ENCODE measurements at regions of chr17 and their contacts with region 1.

Region 1: GRCh38 chr17:42997984-42998938 is at the start of gene RPL27:
- DNase-seq: peak; percentile 89 to 99 (median 98)
- ATAC-seq: peak; percentile 97
- H3K4me3 ChIP-seq: peak within 1 kb of the TSS; percentile 91
- H3K4me3 Mint-ChIP-seq: peak within 1 kb of the TSS; percentile 74 to 98 (median 95)
- H3K27ac ChIP-seq: peak within 1 kb of the TSS; percentile 97
- H3K27ac Mint-ChIP-seq: peak within 1 kb of the TSS; percentile 89 to 100 (median 99)
- H3K4me1 ChIP-seq: peaks cover 15 to 18% of the 10 kb centered on the region in 2 donors
- H3K4me1 Mint-ChIP-seq: peaks cover 16 to 29% (median 24%) of the 10 kb centered on the region in 7 donors
- H3K27me3 ChIP-seq: no peaks in the 10 kb centered on the region
- H3K27me3 Mint-ChIP-seq: no peaks in the 10 kb centered on the region
- total RNA-seq, gene RPL27: 951 to 1,861 (median 1,662) TPM

Region 2: GRCh38 chr17:42677008-42677857 is 321.0 kb before region 1 on chr17:
- CTCF ChIA-PET with region 1: no interaction called
- POLR2A ChIA-PET with region 1: no interaction called
- intact Hi-C with region 1: loop called in 1 of 2 experiments (anchors 1 kb)
- DNase-seq: peak; percentile 80 to 98 (median 92)
- ATAC-seq: peak; percentile 90
- H3K4me3 ChIP-seq: peak overlapping the region; percentile 73
- H3K4me3 Mint-ChIP-seq: peak overlapping the region; percentile 79 to 94 (median 90)
- H3K27ac ChIP-seq: peak overlapping the region; percentile 64
- H3K27ac Mint-ChIP-seq: peak overlapping the region in 8 of 9 donors; percentile 7 to 91 (median 82)
- H3K4me1 ChIP-seq: peaks cover 47 to 57% of the 10 kb centered on the region in 2 donors
- H3K4me1 Mint-ChIP-seq: peaks cover 21 to 60% (median 50%) of the 10 kb centered on the region in 7 donors
- H3K27me3 ChIP-seq: peaks cover 5 to 21% of the 10 kb centered on the region in 2 donors
- H3K27me3 Mint-ChIP-seq: peaks cover 26 to 49% (median 36%) of the 10 kb centered on the region in 5 donors

Region 3: GRCh38 chr17:42819944-42820535 is 178.2 kb before region 1 on chr17:
- CTCF ChIA-PET with region 1: no interaction called
- POLR2A ChIA-PET with region 1: interaction called, 9 read pairs
- intact Hi-C with region 1: loop called in 1 of 2 experiments (anchors 1 kb)
- DNase-seq: peak; percentile 16 to 57 (median 34)
- ATAC-seq: no peak
- H3K4me3 ChIP-seq: no peak overlapping the region
- H3K4me3 Mint-ChIP-seq: peak overlapping the region in 2 of 10 donors; percentile 1 to 22
- H3K27ac ChIP-seq: peak overlapping the region; percentile 40
- H3K27ac Mint-ChIP-seq: peak overlapping the region in 4 of 9 donors; percentile 6 to 43 (median 27)
- H3K4me1 ChIP-seq: peaks cover 6 to 12% of the 10 kb centered on the region in 2 donors
- H3K4me1 Mint-ChIP-seq: peaks cover 19 to 42% (median 28%) of the 10 kb centered on the region in 7 donors
- H3K27me3 ChIP-seq: no peaks in the 10 kb centered on the region
- H3K27me3 Mint-ChIP-seq: no peaks in the 10 kb centered on the region

Region 4: GRCh38 chr17:42878123-42878880 is 120.0 kb before region 1 on chr17:
- CTCF ChIA-PET with region 1: no interaction called
- POLR2A ChIA-PET with region 1: no interaction called
- intact Hi-C with region 1: no loop called
- DNase-seq: no peak
- ATAC-seq: no peak
- H3K4me3 ChIP-seq: no peak overlapping the region
- H3K4me3 Mint-ChIP-seq: no peak overlapping the region
- H3K27ac ChIP-seq: no peak overlapping the region
- H3K27ac Mint-ChIP-seq: no peak overlapping the region
- H3K4me1 ChIP-seq: no peaks in the 10 kb centered on the region
- H3K4me1 Mint-ChIP-seq: no peaks in the 10 kb centered on the region
- H3K27me3 ChIP-seq: no peaks in the 10 kb centered on the region
- H3K27me3 Mint-ChIP-seq: peaks cover 4 to 20% (median 12%) of the 10 kb centered on the region in 5 donors

Region 5: GRCh38 chr17:42980398-42981397 is 17.6 kb before region 1 on chr17 and contains the start of gene RUNDC1:
- CTCF ChIA-PET with region 1: interaction called, 4 read pairs
- POLR2A ChIA-PET with region 1: interaction called, 9 read pairs
- intact Hi-C with region 1: loop called (anchors 1 kb)
- DNase-seq: peak; percentile 81 to 93 (median 87)
- ATAC-seq: peak; percentile 93
- H3K4me3 ChIP-seq: peak within 1 kb of the TSS; percentile 81
- H3K4me3 Mint-ChIP-seq: peak within 1 kb of the TSS; percentile 96 to 99 (median 98)
- H3K27ac ChIP-seq: peak within 1 kb of the TSS; percentile 84
- H3K27ac Mint-ChIP-seq: peak within 1 kb of the TSS; percentile 83 to 98 (median 94)
- H3K4me1 ChIP-seq: peaks cover 4 to 16% of the 10 kb centered on the region in 2 donors
- H3K4me1 Mint-ChIP-seq: peaks cover 25 to 42% (median 38%) of the 10 kb centered on the region in 7 donors
- H3K27me3 ChIP-seq: no peaks in the 10 kb centered on the region
- H3K27me3 Mint-ChIP-seq: no peaks in the 10 kb centered on the region
- total RNA-seq, gene RUNDC1: 12.2 to 21.4 (median 19.4) TPM

Region 6: GRCh38 chr17:43125133-43125966 is 127.1 kb after region 1 on chr17 and contains the start of gene BRCA1:
- CTCF ChIA-PET with region 1: no interaction called
- POLR2A ChIA-PET with region 1: no interaction called
- intact Hi-C with region 1: loop called (anchors 1 kb)
- DNase-seq: peak; percentile 78 to 98 (median 96)
- ATAC-seq: peak; percentile 100
- H3K4me3 ChIP-seq: peak within 1 kb of the TSS; percentile 83
- H3K4me3 Mint-ChIP-seq: peak within 1 kb of the TSS; percentile 88 to 97 (median 94)
- H3K27ac ChIP-seq: peak within 1 kb of the TSS; percentile 83
- H3K27ac Mint-ChIP-seq: peak within 1 kb of the TSS; percentile 88 to 98 (median 93)
- H3K4me1 ChIP-seq: peaks cover 6 to 8% of the 10 kb centered on the region in 2 donors
- H3K4me1 Mint-ChIP-seq: peaks cover 14 to 39% (median 30%) of the 10 kb centered on the region in 7 donors
- H3K27me3 ChIP-seq: no peaks in the 10 kb centered on the region
- H3K27me3 Mint-ChIP-seq: no peaks in the 10 kb centered on the region
- total RNA-seq, gene BRCA1: 2.6 to 54.1 (median 5.4) TPM

Region 7: GRCh38 chr17:43360739-43361505 is 362.7 kb after region 1 on chr17:
- CTCF ChIA-PET with region 1: no interaction called
- POLR2A ChIA-PET with region 1: interaction called, 68 read pairs
- intact Hi-C with region 1: loop called (anchors 1 kb)
- DNase-seq: peak; percentile 69 to 97 (median 91)
- ATAC-seq: peak; percentile 88
- H3K4me3 ChIP-seq: peak overlapping the region; percentile 71
- H3K4me3 Mint-ChIP-seq: peak overlapping the region; percentile 87 to 99 (median 96)
- H3K27ac ChIP-seq: peak overlapping the region; percentile 95
- H3K27ac Mint-ChIP-seq: peak overlapping the region; percentile 98 to 100 (median 100)
- H3K4me1 ChIP-seq: peaks cover 13 to 14% of the 10 kb centered on the region in 2 donors
- H3K4me1 Mint-ChIP-seq: peaks cover 9 to 56% (median 38%) of the 10 kb centered on the region in 7 donors
- H3K27me3 ChIP-seq: no peaks in the 10 kb centered on the region
- H3K27me3 Mint-ChIP-seq: peaks cover 0 to 9% (median 0%) of the 10 kb centered on the region in 5 donors

Region 8: DNA sequence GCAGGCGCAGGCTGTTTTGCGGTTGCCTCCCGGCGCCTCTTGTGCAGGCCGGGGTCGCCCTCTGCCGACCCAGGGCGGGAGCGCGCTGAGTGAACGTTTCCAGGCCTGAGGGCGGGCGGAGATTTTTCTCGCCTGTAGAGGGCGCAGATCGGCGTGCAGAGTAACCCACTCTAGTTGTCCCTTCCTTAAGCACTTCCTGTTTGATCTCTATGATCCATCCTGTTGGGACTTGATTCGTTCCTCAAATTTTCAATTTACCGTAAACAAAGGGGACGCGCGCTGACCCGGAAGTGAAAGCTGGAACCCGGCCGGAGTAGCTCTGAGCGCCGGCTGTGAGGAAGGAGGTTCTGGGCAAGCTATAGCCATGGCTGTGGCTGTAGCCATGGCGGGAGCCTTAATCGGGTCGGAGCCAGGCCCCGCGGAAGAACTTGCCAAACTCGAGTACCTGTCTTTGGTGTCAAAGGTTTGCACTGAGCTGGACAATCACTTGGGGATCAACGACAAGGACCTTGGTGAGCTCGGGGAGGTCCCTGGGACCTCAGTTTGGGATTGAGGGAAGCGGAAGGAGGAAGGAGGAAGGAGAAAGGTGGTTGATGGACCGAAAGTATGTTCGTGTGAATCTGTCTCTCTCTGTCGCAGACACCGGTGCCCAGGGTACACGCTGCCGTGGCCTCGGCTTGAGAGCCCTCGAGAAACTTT is 485.6 kb after region 1 on chr17 and contains the start of gene DHX8:
- CTCF ChIA-PET with region 1: interaction called, 5 read pairs
- POLR2A ChIA-PET with region 1: interaction called, 11 read pairs
- intact Hi-C with region 1: loop called (anchors 1 to 5 kb)
- DNase-seq: peak; percentile 96 to 100 (median 99)
- ATAC-seq: peak; percentile 99
- H3K4me3 ChIP-seq: peak within 1 kb of the TSS; percentile 90
- H3K4me3 Mint-ChIP-seq: peak within 1 kb of the TSS; percentile 98 to 100 (median 100)
- H3K27ac ChIP-seq: peak within 1 kb of the TSS; percentile 87
- H3K27ac Mint-ChIP-seq: peak within 1 kb of the TSS; percentile 91 to 100 (median 98)
- H3K4me1 ChIP-seq: peaks cover 21 to 29% of the 10 kb centered on the region in 2 donors
- H3K4me1 Mint-ChIP-seq: peaks cover 19 to 52% (median 36%) of the 10 kb centered on the region in 7 donors
- H3K27me3 ChIP-seq: no peaks in the 10 kb centered on the region
- H3K27me3 Mint-ChIP-seq: no peaks in the 10 kb centered on the region
- total RNA-seq, gene DHX8: 67.7 to 93.4 (median 77.8) TPM

Region 9: DNA sequence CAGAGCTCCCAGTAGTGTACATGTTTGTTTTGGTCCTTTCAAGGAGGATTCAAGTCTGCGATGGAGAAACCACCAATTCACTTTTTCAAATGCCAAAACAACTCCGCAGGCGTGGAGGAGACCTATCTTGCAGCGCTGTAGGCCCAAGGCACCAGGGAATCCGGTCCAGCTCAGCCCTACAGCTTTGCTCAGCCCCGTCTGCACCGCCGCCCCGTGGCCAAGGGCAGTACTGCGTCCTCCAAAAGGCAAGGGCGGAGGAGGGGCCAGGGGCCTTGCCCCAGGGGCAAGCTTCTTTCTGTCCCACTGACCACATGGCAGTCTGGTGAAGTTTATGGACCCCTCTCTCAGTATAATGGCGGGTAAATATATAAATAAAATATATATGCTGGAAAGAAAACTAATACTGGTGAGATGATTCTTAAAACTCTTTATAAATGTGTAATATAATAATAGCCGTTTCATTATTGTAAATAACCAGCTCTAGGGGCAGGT is 848.0 kb after region 1 on chr17:
- CTCF ChIA-PET with region 1: no interaction called
- POLR2A ChIA-PET with region 1: no interaction called
- intact Hi-C with region 1: no loop called
- DNase-seq: peak; percentile 40 to 86 (median 63)
- ATAC-seq: peak; percentile 100
- H3K4me3 ChIP-seq: no peak overlapping the region
- H3K4me3 Mint-ChIP-seq: no peak overlapping the region
- H3K27ac ChIP-seq: no peak overlapping the region
- H3K27ac Mint-ChIP-seq: no peak overlapping the region
- H3K4me1 ChIP-seq: no peaks in the 10 kb centered on the region
- H3K4me1 Mint-ChIP-seq: peaks cover 0 to 3% (median 0%) of the 10 kb centered on the region in 7 donors
- H3K27me3 ChIP-seq: no peaks in the 10 kb centered on the region
- H3K27me3 Mint-ChIP-seq: peaks cover 11 to 21% (median 19%) of the 10 kb centered on the region in 5 donors

Measured in naive thymus-derived CD4-positive, alpha-beta T cell (primary cell).